CD4-positive, alpha-beta T cell (primary cell): ENCODE measurements at regions of chr15 and their contacts with region 1.

Region 1: GRCh38 chr15:67510597-67511225 is 10.2 kb upstream of the C15orf61 start:
- DNase-seq: no peak
- ATAC-seq: no peak
- H3K4me3 ChIP-seq: no peak overlapping the region
- H3K4me3 Mint-ChIP-seq: no peak overlapping the region
- H3K27ac ChIP-seq: no peak overlapping the region
- H3K27ac Mint-ChIP-seq: no peak overlapping the region
- H3K4me1 ChIP-seq: no peaks in the 10 kb centered on the region
- H3K4me1 Mint-ChIP-seq: no peaks in the 10 kb centered on the region
- H3K27me3 ChIP-seq: no peaks in the 10 kb centered on the region
- H3K27me3 Mint-ChIP-seq: no peaks in the 10 kb centered on the region
- CTCF ChIP-seq: no peak

Region 2: DNA sequence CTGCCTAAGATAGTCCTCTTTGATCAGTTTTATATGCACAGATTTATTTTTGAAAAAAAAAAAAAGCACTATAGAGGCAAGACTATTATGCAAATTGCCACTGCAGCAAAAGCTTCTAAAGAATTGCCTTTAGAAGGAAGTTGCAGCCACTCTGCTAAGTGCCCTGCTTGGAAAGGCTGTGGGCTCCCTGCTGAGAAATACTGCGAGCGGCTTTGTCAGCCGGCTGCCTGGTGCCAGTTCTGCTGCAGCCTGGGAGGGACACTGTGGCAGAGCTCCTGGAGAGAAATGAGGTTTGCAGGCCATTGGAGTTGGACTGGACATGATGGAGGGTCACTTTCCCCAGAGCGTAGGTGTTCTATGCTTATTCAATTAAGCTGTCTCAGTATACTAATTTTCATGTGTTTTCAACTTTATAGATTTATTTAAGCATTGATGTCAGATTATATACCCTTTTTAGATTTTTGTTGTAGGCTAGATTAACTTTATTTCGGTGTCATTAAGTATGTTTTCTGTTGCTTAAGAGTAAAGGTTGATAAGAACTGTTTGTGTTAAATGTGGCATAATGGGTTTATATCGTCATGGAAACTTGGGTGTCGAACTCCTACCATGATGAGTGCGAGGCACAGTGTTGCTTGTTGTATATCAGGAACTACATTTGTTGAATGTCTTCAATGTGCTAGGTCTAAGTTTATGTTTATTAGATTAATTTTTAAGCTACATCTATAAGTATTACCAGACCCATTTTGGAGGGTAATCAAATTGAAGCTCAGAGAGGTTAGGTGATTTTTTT is 38.3 kb after region 1 on chr15:
- CTCF ChIA-PET with region 1: no interaction called
- POLR2A ChIA-PET with region 1: no interaction called
- intact Hi-C with region 1: loop called in 1 of 2 experiments (anchors 5 kb)
- DNase-seq: no peak
- ATAC-seq: no peak
- H3K4me3 ChIP-seq: no peak overlapping the region
- H3K4me3 Mint-ChIP-seq: no peak overlapping the region
- H3K27ac ChIP-seq: no peak overlapping the region
- H3K27ac Mint-ChIP-seq: no peak overlapping the region
- H3K4me1 ChIP-seq: peaks cover under 1% of the 10 kb centered on the region
- H3K4me1 Mint-ChIP-seq: peaks cover 40% of the 10 kb centered on the region
- H3K27me3 ChIP-seq: no peaks in the 10 kb centered on the region
- H3K27me3 Mint-ChIP-seq: no peaks in the 10 kb centered on the region
- CTCF ChIP-seq: no peak

Region 3: GRCh38 chr15:67587754-67588153 is 77.0 kb after region 1 on chr15:
- CTCF ChIA-PET with region 1: no interaction called
- POLR2A ChIA-PET with region 1: no interaction called
- intact Hi-C with region 1: no loop called
- DNase-seq: no peak
- ATAC-seq: no peak
- H3K4me3 ChIP-seq: no peak overlapping the region
- H3K4me3 Mint-ChIP-seq: no peak overlapping the region
- H3K27ac ChIP-seq: no peak overlapping the region
- H3K27ac Mint-ChIP-seq: no peak overlapping the region
- H3K4me1 ChIP-seq: no peaks in the 10 kb centered on the region
- H3K4me1 Mint-ChIP-seq: no peaks in the 10 kb centered on the region
- H3K27me3 ChIP-seq: no peaks in the 10 kb centered on the region
- H3K27me3 Mint-ChIP-seq: no peaks in the 10 kb centered on the region
- CTCF ChIP-seq: no peak